ENCODE measurements at regions of chr6 and their contacts with region 1.

Region 1: GRCh38 chr6:132530293-132530974 is 7.6 kb upstream of the TAAR9 start:
- DNase-seq: peak; percentile 29 to 81 (median 55)
- ATAC-seq: peak; percentile 95
- H3K4me3 ChIP-seq: no peak overlapping the region
- H3K27ac ChIP-seq: no peak overlapping the region
- H3K4me1 ChIP-seq: no peaks in the 10 kb centered on the region; a peak in 1 of 5 replicates
- H3K27me3 ChIP-seq: peaks cover 7 to 9% of the 10 kb centered on the region in 2 experiments; a peak in 3 of 5 replicates
- CTCF ChIP-seq: peak; percentile 60 to 83 (median 62); a peak in 5 of 6 replicates
- EP300 ChIP-seq: no peak
- POLR2A ChIP-seq: no peak
- RAD21 ChIP-seq: peak; percentile 70 to 73

Region 2: GRCh38 chr6:132445201-132445951 is 85.1 kb before region 1 on chr6:
- CTCF ChIA-PET with region 1: no interaction called
- POLR2A ChIA-PET with region 1: no interaction called
- in situ Hi-C with region 1: no loop called
- intact Hi-C with region 1: no loop called
- DNase-seq: no peak
- ATAC-seq: no peak
- H3K4me3 ChIP-seq: no peak overlapping the region
- H3K27ac ChIP-seq: no peak overlapping the region
- H3K4me1 ChIP-seq: no peaks in the 10 kb centered on the region
- H3K27me3 ChIP-seq: no peaks in the 10 kb centered on the region
- CTCF ChIP-seq: no peak
- EP300 ChIP-seq: no peak
- POLR2A ChIP-seq: no peak
- RAD21 ChIP-seq: no peak

Region 3: GRCh38 chr6:132659082-132659481 is 128.6 kb after region 1 on chr6 and contains the start of gene TAAR1:
- CTCF ChIA-PET with region 1: no interaction called
- POLR2A ChIA-PET with region 1: no interaction called
- in situ Hi-C with region 1: no loop called
- intact Hi-C with region 1: no loop called
- DNase-seq: no peak
- ATAC-seq: no peak
- H3K4me3 ChIP-seq: no peak within 1 kb of the TSS
- H3K27ac ChIP-seq: no peak within 1 kb of the TSS
- H3K4me1 ChIP-seq: no peaks in the 10 kb centered on the region
- H3K27me3 ChIP-seq: peaks cover 0 to 5% of the 10 kb centered on the region in 2 experiments; a peak in 1 of 5 replicates
- CTCF ChIP-seq: no peak
- EP300 ChIP-seq: no peak
- POLR2A ChIP-seq: no peak
- RAD21 ChIP-seq: no peak
- polyA plus RNA-seq, gene TAAR1: not detected

Region 4: GRCh38 chr6:132669690-132670291 is 139.4 kb after region 1 on chr6:
- CTCF ChIA-PET with region 1: no interaction called
- POLR2A ChIA-PET with region 1: no interaction called
- in situ Hi-C with region 1: no loop called
- intact Hi-C with region 1: loop called (anchors 5 kb)
- DNase-seq: peak in 2 of 4 experiments; percentile 10 to 16
- ATAC-seq: peak; percentile 77
- H3K4me3 ChIP-seq: no peak overlapping the region
- H3K27ac ChIP-seq: no peak overlapping the region
- H3K4me1 ChIP-seq: no peaks in the 10 kb centered on the region; a peak in 2 of 5 replicates
- H3K27me3 ChIP-seq: no peaks in the 10 kb centered on the region
- CTCF ChIP-seq: peak; percentile 33 to 67 (median 45); a peak in 4 of 6 replicates
- EP300 ChIP-seq: no peak
- POLR2A ChIP-seq: no peak
- RAD21 ChIP-seq: peak; percentile 57 to 68

Region 5: GRCh38 chr6:132768051-132768517 is 237.7 kb after region 1 on chr6:
- CTCF ChIA-PET with region 1: interaction called, 13 read pairs
- POLR2A ChIA-PET with region 1: interaction called, 3 read pairs
- in situ Hi-C with region 1: loop called (anchors 25 kb)
- intact Hi-C with region 1: loop called (anchors 1 kb)
- DNase-seq: peak; percentile 42 to 67 (median 54)
- ATAC-seq: peak; percentile 99
- H3K4me3 ChIP-seq: peak overlapping the region; percentile 34
- H3K27ac ChIP-seq: no peak overlapping the region; the same call in 2 of the 3 replicates
- H3K4me1 ChIP-seq: no peaks in the 10 kb centered on the region
- H3K27me3 ChIP-seq: no peaks in the 10 kb centered on the region
- CTCF ChIP-seq: peak; percentile 69 to 92 (median 71)
- EP300 ChIP-seq: no peak
- POLR2A ChIP-seq: no peak
- RAD21 ChIP-seq: peak; percentile 80 to 83

Region 6: DNA sequence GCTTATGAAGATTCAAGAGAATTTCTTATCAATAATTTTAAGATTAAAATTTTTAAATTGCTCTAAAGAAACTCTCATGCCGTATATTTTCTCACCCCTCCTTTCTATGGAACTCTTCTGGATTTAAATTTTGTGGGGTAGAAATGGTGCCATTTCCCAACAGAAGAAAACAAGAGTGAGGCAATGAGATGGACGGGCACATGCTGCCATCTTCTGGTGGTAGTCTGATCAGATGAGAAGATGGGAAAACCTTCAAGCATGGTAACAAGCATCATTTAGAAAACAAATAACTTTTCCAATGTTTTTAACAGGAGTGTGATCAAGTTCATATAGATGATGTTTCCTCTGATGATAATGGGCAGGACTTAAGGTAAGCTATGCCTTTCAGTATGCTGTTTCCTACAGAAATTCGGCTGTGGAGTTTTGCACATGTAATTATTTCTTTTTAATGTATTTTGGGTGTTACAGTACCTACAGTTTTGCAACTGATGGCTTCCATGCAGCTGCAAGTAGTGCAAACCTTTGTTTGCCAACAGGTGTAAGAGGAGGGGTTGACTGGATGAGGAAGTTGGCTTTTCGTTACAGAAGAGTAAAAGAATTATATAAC is 982.1 kb after region 1 on chr6:
- CTCF ChIA-PET with region 1: no interaction called
- POLR2A ChIA-PET with region 1: no interaction called
- in situ Hi-C with region 1: no loop called
- intact Hi-C with region 1: loop called (anchors 5 kb)
- DNase-seq: peak; percentile 8 to 42 (median 14)
- ATAC-seq: peak; percentile 68; the same call in 2 of the 3 replicates
- H3K4me3 ChIP-seq: no peak overlapping the region
- H3K27ac ChIP-seq: no peak overlapping the region
- H3K4me1 ChIP-seq: no peaks in the 10 kb centered on the region
- H3K27me3 ChIP-seq: no peaks in the 10 kb centered on the region
- CTCF ChIP-seq: peak; percentile 50 to 64 (median 52)
- EP300 ChIP-seq: no peak
- POLR2A ChIP-seq: no peak
- RAD21 ChIP-seq: peak; percentile 66 to 73

Region 7: DNA sequence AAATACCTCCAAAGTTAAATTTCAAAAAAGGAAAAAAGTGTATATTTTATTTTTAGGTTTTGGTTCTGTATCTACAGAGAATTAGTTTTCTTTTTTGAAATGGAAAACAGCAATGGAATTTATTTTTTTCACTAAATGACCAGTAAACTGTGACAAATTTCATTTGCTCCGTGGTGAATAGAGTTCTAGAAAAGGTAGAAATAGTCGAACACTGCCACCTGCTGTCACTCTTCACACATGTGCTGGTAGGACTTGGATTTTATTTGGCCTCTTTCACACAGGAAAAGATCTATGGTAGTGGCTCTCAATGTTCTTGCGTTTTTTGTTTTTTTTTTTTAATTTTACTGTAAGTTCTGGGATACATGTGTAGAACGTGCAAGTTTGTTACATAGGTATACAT is 1023.2 kb after region 1 on chr6:
- CTCF ChIA-PET with region 1: no interaction called
- POLR2A ChIA-PET with region 1: no interaction called
- in situ Hi-C with region 1: loop called (anchors 25 kb)
- intact Hi-C with region 1: loop called (anchors 5 kb)
- DNase-seq: peak; percentile 15 to 59 (median 26)
- ATAC-seq: peak; percentile 92
- H3K4me3 ChIP-seq: no peak overlapping the region
- H3K27ac ChIP-seq: no peak overlapping the region
- H3K4me1 ChIP-seq: no peaks in the 10 kb centered on the region
- H3K27me3 ChIP-seq: no peaks in the 10 kb centered on the region
- CTCF ChIP-seq: peak; percentile 51 to 72 (median 53); a peak in 4 of 6 replicates
- EP300 ChIP-seq: no peak
- POLR2A ChIP-seq: no peak
- RAD21 ChIP-seq: peak; percentile 74 to 76